Dorsolateral prefrontal cortex (tissue), 120 donors: ENCODE measurements at regions of chr3 and their contacts with region 1.

Region 1: GRCh38 chr3:155859859-155860258 is 5.6 kb upstream of the SLC33A1 start:
- DNase-seq: no peak
- H3K4me3 ChIP-seq: peak overlapping the region in 18 of 59 donors; percentile 2 to 41 (median 16)
- H3K27ac ChIP-seq: peak overlapping the region in 1 of 59 donors; percentile 12
- H3K27me3 ChIP-seq: no peaks in the 10 kb centered on the region
- CTCF ChIP-seq: peak in 43 of 56 donors; percentile 11 to 60 (median 31)

Region 2: DNA sequence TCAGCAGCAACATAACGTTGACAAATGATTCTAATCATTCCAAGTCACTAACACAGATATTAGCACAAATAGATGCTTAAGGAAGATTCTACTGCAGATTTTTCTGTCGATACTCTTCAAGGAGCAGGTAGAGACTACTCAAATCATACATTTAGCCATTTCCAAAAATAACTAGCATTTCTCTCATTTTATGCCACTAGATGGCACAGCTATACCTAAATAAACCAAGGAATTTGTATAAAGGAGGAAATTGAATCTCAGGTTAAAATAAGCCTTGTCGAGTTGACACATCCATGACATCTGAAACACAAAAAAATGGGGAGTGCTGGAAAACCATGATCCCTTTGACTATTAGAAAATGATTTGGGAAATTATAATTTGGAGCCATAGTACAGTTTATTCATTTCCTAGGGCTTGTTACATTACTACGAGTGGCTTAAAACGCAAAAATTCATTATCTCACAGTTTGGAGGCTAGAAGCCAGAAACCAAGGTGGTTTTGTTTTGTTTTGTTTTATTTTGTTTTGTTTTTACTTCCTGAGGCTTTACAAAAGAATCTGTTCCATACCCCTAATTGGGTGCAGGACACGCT is 506.9 kb before region 1 on chr3:
- intact Hi-C with region 1: loop called in 1 of 2 experiments (anchors 10 kb)
- DNase-seq: no peak
- H3K4me3 ChIP-seq: no peak overlapping the region
- H3K27ac ChIP-seq: no peak overlapping the region
- H3K27me3 ChIP-seq: peaks cover 0 to 4% (median 0%) of the 10 kb centered on the region in 45 donors
- CTCF ChIP-seq: peak; percentile 18 to 83 (median 64)

Region 3: GRCh38 chr3:155382396-155383042 is 477.3 kb before region 1 on chr3:
- intact Hi-C with region 1: loop called in 1 of 2 experiments (anchors 10 kb)
- DNase-seq: peak in 9 of 10 donors; percentile 14 to 72 (median 53)
- H3K4me3 ChIP-seq: no peak overlapping the region
- H3K27ac ChIP-seq: no peak overlapping the region
- H3K27me3 ChIP-seq: peaks cover 0 to 6% (median 0%) of the 10 kb centered on the region in 45 donors
- CTCF ChIP-seq: peak in 54 of 56 donors; percentile 16 to 76 (median 52)

Region 4: GRCh38 chr3:156059950-156060501 is 200.2 kb after region 1 on chr3:
- intact Hi-C with region 1: no loop called
- DNase-seq: no peak
- H3K4me3 ChIP-seq: no peak overlapping the region
- H3K27ac ChIP-seq: peak overlapping the region in 1 of 59 donors; percentile 9
- H3K27me3 ChIP-seq: no peaks in the 10 kb centered on the region
- CTCF ChIP-seq: no peak